Posterior vena cava (tissue), 2 donors: ENCODE measurements at regions of chr9 and their contacts with region 1.

Region 1: DNA sequence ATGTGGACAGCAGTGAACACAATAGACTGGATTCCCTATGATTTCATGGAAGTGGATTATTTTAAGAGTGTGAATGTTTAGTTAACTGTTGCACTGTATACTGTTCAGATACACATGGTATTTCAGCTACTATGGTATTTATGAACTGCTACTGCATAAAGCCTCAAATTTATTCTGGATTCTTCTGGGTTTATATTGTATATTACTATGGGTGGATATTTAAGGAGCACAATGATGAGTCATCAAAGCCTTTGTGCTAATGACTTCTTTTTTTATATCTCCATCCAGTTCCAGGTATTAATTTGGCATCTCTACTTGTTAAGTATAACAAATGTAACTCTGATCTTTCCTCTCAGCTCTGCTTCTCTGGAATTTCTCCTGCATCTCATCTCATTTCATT is 6.8 kb downstream of the KDM4C start:
- DNase-seq: no peak

Region 2: GRCh38 chr9:5863092-5863746 is 901.3 kb before region 1 on chr9:
- intact Hi-C with region 1: loop called in 1 of 2 experiments (anchors 5 kb)
- DNase-seq: no peak

Region 3: GRCh38 chr9:6171667-6172066 is 592.9 kb before region 1 on chr9:
- intact Hi-C with region 1: no loop called
- DNase-seq: no peak

Region 4: DNA sequence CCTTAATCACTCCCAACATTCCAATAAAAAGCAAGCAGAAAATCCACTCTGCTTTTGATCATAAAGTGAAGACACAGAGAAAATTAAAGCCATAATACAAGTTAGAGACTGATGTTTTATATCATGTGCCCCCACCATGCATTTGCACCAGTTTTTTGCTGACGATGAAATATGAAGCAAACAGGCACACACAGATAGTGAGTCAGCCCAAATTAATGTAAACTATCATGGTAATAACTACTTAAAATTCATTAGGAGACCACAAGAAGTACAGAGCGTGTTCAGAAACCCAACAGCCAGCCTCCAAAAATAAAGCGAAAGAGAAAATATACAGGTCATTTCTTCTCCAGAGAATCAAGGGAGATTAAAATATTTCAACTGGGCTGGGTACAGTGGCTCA is 53.1 kb before region 1 on chr9:
- intact Hi-C with region 1: no loop called
- DNase-seq: no peak

Region 5: GRCh38 chr9:6788162-6789016 is 23.9 kb after region 1 on chr9:
- intact Hi-C with region 1: no loop called
- DNase-seq: no peak

Region 6: DNA sequence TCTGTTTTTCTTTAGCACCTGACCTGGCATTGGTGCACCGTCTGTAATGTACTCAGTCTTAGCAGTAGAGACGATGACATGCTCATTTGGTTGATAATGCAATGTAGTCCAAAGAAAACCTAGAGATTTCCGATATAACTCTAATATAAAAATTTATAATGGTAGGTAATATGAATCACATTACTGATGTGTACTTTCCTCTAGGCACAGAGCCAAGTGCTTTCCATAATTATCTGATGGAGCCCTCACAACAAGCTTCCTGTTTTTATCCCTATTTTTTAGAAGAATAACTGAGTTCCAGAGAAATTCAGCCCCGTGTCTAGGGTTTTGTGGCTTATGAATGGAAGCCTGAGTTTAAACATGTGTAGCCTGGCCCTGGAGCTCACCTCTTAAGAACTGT is 46.9 kb after region 1 on chr9:
- intact Hi-C with region 1: loop called in 1 of 2 experiments (anchors 10 kb)
- DNase-seq: no peak

Region 7: GRCh38 chr9:7008411-7008810 is 243.9 kb after region 1 on chr9:
- intact Hi-C with region 1: no loop called
- DNase-seq: no peak